GM12878 (cell line): ENCODE measurements at regions of chr1 and their contacts with region 1.

Region 1: GRCh38 chr1:20058531-20058930 is 11.5 kb upstream of the PLA2G5 start:
- DNase-seq: no peak
- ATAC-seq: peak; percentile 83
- H3K4me3 ChIP-seq: no peak overlapping the region
- H3K27ac ChIP-seq: no peak overlapping the region
- H3K4me1 ChIP-seq: peaks cover 19% of the 10 kb centered on the region
- H3K27me3 ChIP-seq: no peaks in the 10 kb centered on the region
- CTCF ChIP-seq: no peak
- EP300 ChIP-seq: no peak
- POLR2A ChIP-seq: no peak
- RAD21 ChIP-seq: no peak

Region 2: GRCh38 chr1:20047096-20047495 is 11.4 kb before region 1 on chr1:
- CTCF ChIA-PET with region 1: interaction called, 10 read pairs
- POLR2A ChIA-PET with region 1: interaction called, 6 read pairs
- RAD21 ChIA-PET with region 1: interaction called, 12 read pairs
- SMC1A ChIA-PET with region 1: interaction called, 11 read pairs
- in situ Hi-C with region 1: no loop called
- intact Hi-C with region 1: no loop called
- DNase-seq: no peak
- ATAC-seq: no peak
- H3K4me3 ChIP-seq: no peak overlapping the region
- H3K27ac ChIP-seq: no peak overlapping the region
- H3K4me1 ChIP-seq: no peaks in the 10 kb centered on the region
- H3K27me3 ChIP-seq: no peaks in the 10 kb centered on the region; a peak in 2 of 4 replicates
- CTCF ChIP-seq: no peak
- EP300 ChIP-seq: no peak
- POLR2A ChIP-seq: no peak
- RAD21 ChIP-seq: no peak

Region 3: DNA sequence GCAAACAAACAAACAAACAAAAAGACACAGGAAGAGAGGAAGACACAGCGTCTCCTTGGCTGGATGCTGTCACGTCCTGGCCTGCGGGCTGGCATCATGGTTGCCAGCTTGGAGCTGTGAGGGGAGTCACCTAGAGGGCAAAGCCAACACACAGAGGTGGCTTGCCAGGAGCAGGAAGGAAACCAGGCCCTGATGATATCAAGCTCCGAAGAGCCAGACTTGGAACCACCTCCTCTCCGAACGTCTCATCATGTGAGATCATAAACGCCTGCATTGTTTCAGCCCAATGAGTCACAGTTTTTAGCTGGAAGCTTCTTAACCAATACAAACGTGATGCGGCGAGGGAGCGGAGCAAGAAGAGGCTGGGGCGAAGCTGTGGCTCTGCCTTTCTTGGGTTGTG is 52.1 kb after region 1 on chr1:
- CTCF ChIA-PET with region 1: no interaction called
- POLR2A ChIA-PET with region 1: no interaction called
- RAD21 ChIA-PET with region 1: no interaction called
- SMC1A ChIA-PET with region 1: no interaction called
- in situ Hi-C with region 1: no loop called
- intact Hi-C with region 1: no loop called
- DNase-seq: no peak
- ATAC-seq: no peak
- H3K4me3 ChIP-seq: no peak overlapping the region
- H3K27ac ChIP-seq: no peak overlapping the region
- H3K4me1 ChIP-seq: no peaks in the 10 kb centered on the region; the same call in 1 of the 2 replicates
- H3K27me3 ChIP-seq: no peaks in the 10 kb centered on the region
- CTCF ChIP-seq: no peak
- EP300 ChIP-seq: no peak
- POLR2A ChIP-seq: no peak
- RAD21 ChIP-seq: no peak

Region 4: GRCh38 chr1:20402585-20403422 is 344.3 kb after region 1 on chr1:
- CTCF ChIA-PET with region 1: no interaction called
- POLR2A ChIA-PET with region 1: interaction called, 10 read pairs
- RAD21 ChIA-PET with region 1: no interaction called
- SMC1A ChIA-PET with region 1: no interaction called
- in situ Hi-C with region 1: no loop called
- intact Hi-C with region 1: no loop called
- DNase-seq: no peak
- ATAC-seq: no peak
- H3K4me3 ChIP-seq: no peak overlapping the region
- H3K27ac ChIP-seq: no peak overlapping the region
- H3K4me1 ChIP-seq: no peaks in the 10 kb centered on the region
- H3K27me3 ChIP-seq: peaks cover 8 to 13% of the 10 kb centered on the region in 2 experiments
- CTCF ChIP-seq: no peak
- EP300 ChIP-seq: no peak
- POLR2A ChIP-seq: no peak
- RAD21 ChIP-seq: no peak